Heart right ventricle (tissue), 16 donors: ENCODE measurements at regions of chr19 and their contacts with region 1.

Region 1: DNA sequence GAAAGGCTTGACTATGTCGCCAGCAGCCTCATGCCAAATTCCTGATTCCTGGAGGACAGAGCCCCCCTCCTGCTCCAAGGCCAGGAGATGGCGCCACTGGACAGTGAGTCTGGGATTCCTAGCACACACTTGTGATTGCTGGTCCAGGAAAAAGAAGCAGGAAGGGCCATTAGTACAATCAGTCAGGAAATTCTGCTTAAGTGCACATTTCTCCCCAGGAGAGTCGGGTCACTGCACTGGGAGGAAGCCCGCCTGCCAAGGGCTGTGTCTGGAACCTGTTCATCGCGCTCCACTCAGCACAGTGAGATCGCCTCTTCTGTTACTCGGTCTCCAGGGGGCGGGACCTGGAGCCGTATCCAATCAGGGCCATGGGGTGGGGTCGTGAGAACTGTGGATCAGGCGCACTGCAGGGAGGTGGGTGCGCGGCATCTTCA is 65.1 kb downstream of the ZNF823 start:
- DNase-seq: peak; percentile 73 to 83
- ATAC-seq: peak; percentile 84 to 97 (median 94)
- H3K4me3 ChIP-seq: peak overlapping the region; percentile 36 to 73 (median 59)
- H3K27ac ChIP-seq: peak overlapping the region in 7 of 10 donors; percentile 2 to 54 (median 30)
- H3K4me1 ChIP-seq: peaks cover 0 to 14% (median 8%) of the 10 kb centered on the region in 9 donors
- H3K27me3 ChIP-seq: peaks cover 0 to 19% (median 0%) of the 10 kb centered on the region in 7 donors
- CTCF ChIP-seq: peak; percentile 56 to 94 (median 81)

Region 2: DNA sequence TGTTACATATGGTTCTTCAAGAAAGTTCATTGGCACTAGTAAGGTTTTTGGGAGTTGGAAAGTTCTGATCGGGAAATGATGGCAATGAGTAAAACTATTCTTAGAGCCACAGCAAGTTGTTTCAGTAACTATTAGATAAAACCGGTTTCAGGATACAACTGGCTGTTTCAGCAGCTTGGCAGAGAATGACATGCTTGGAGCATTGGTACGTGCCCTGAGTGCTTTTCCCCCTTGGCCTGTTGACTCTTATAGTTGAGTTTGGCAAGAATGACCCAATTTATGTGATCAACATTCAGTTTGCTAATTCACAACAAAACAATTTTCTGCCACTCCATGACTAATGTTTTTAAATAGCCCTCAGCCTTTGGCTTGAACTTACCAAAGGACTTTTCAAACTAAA is 113.9 kb after region 1 on chr19:
- intact Hi-C with region 1: loop called in 4 of 10 experiments (anchors 2 to 10 kb)
- DNase-seq: no peak
- ATAC-seq: no peak
- H3K4me3 ChIP-seq: no peak overlapping the region
- H3K27ac ChIP-seq: no peak overlapping the region
- H3K4me1 ChIP-seq: no peaks in the 10 kb centered on the region
- H3K27me3 ChIP-seq: no peaks in the 10 kb centered on the region
- CTCF ChIP-seq: no peak